ENCODE measurements at regions of chrX and their contacts with region 1.

Region 1: DNA sequence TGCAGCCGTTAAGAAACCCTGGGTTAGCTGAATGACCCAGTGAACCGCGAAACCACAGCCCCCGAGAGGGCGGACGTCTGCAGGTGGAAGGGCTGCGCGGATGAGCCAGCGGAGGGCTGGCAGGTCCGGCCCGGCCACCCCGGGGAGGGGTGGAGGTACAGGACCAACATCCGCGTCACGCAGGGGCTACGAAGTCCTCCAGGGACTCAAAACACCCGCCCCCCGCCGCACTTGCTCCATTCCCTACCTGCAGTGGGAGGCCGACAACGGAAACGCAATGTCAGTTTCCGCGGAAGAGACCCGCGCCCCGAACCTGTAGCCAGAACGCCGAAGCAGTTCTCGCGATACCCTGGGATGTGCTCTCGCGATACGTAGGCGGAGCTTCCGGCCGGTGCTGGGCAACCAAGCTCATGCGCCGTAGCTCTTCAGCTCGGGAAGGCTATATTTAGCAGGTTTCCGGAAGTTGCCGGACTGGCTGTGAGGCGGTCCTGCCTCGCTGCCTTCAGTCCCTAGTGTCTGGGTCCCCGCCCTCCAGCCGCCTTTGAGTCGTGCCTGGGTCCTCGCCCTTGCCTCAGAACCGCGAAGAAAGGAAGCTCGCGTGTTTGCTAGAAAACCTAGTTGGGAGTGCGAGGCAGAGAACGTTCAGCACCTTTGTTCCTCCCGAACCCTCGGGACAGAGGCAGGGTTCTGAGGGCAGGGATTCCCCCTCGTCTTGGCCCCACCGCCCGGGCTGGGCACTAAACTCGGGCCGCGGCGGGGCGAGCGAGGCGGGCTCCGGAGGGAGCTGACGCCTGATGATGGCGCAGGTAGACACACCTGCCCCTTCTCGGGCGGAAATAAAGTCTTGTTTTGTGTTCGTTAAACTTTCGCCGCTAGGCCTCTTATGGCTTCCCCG is at the starts of genes OFD1 and TRAPPC2:
- DNase-seq: peak; percentile 89 to 94 (median 91)
- ATAC-seq: peak; percentile 99 to 100 (median 100)
- H3K4me3 ChIP-seq: peak within 1 kb of the TSS; percentile 47 to 91 (median 80)
- H3K27ac ChIP-seq: peak within 1 kb of the TSS in 11 of 12 donors; percentile 74 to 94 (median 87)
- H3K4me1 ChIP-seq: peaks cover 0 to 38% (median 7%) of the 10 kb centered on the region in 12 donors
- H3K27me3 ChIP-seq: peaks cover 0 to 22% (median 0%) of the 10 kb centered on the region in 9 donors
- CTCF ChIP-seq: no peak
- POLR2A ChIP-seq: peak in 1 of 2 donors; percentile 90
- total RNA-seq, gene OFD1: 5.6 to 12.9 (median 8.9) TPM
- total RNA-seq, gene TRAPPC2: 4.4 to 11.1 (median 5.3) TPM

Region 2: GRCh38 chrX:13699183-13699826 is 35.2 kb before region 1 on chrX:
- intact Hi-C with region 1: loop called in 1 of 10 experiments (anchors 5 kb)
- DNase-seq: no peak
- ATAC-seq: peak in 2 of 4 donors; percentile 77 to 84
- H3K4me3 ChIP-seq: no peak overlapping the region
- H3K27ac ChIP-seq: peak overlapping the region in 2 of 12 donors; percentile 10 to 34
- H3K4me1 ChIP-seq: peaks cover 0 to 72% (median 31%) of the 10 kb centered on the region in 12 donors
- H3K27me3 ChIP-seq: peaks cover 0 to 16% (median 0%) of the 10 kb centered on the region in 9 donors
- CTCF ChIP-seq: no peak
- POLR2A ChIP-seq: no peak